ENCODE measurements at regions of chr11 and their contacts with region 1.

Region 1: GRCh38 chr11:45079943-45080719 is 66.3 kb upstream of the PRDM11 start:
- DNase-seq: peak in 34 of 42 donors; percentile 25 to 86 (median 53)

Region 2: DNA sequence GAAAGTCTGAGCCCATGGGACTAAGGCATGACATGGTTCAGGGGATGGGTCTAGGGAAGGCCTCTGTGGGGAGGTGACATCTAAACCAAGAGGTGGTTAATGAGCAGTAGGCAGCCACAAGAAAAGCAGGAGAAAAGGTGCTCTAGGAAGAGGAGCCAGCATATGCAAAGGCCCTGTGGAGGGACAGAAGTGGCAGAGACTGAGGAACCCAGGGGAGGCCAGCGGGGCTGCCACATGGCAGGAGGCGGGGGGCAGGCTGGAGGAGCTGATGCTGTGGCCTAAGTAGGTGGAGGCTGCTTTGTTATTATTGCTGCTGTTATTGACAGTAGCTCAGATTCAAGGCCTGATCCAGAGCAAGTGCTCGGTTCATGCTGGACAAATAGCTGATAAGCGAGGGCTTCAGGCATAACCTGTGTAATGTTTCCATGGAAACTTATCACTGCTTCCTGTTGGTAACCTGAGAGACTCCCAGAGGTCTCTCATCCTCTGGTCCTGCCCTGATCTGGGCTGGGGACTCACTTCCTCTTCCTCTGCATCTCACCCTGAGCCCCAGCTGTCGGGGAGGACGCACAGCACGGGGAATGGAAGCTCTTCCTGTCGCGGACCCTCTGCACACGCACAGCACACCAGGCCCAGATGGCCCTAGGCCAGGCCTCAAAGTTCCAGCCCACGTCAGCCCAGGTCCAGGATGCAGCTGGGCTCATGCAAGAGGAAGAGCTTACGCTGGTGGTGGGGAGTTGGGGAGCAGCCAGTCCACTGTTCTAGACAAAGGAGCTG is 54.2 kb before region 1 on chr11:
- intact Hi-C with region 1: loop called (anchors 10 kb)
- DNase-seq: peak in 33 of 42 donors; percentile 13 to 68 (median 41)

Region 3: DNA sequence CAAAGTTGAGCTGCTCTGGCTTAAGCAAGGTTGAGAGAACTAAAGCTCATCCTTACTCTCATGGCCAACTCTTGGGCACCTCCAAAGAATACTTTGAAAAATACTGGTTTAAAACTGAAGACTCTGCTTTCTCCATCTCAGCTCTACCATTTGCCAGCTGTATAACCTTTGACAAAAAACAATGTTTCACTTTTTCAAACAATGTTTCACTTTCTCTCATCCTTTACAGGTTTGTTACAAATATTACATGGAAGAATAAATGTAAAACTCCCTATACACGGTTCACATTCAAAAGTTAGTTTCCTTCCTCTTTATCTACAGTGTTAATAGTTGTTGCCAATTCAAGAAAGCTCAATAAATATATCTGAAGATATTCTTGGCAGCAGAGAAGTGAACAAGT is 1494.5 kb after region 1 on chr11:
- intact Hi-C with region 1: no loop called
- DNase-seq: no peak